IMR-90 (cell line): ENCODE measurements at regions of chr10 and their contacts with region 1.

Region 1: GRCh38 chr10:19412531-19412930 is 363.9 kb downstream of the MALRD1 start:
- DNase-seq: peak; percentile 45
- ATAC-seq: peak; percentile 69
- H3K4me3 ChIP-seq: no peak overlapping the region
- H3K27ac ChIP-seq: no peak overlapping the region
- H3K4me1 ChIP-seq: no peaks in the 10 kb centered on the region
- H3K27me3 ChIP-seq: no peaks in the 10 kb centered on the region
- CTCF ChIP-seq: peak; percentile 52
- POLR2A ChIP-seq: no peak
- RAD21 ChIP-seq: peak; percentile 66

Region 2: GRCh38 chr10:18689498-18689897 is 723.0 kb before region 1 on chr10:
- CTCF ChIA-PET with region 1: interaction called, 3 read pairs
- POLR2A ChIA-PET with region 1: no interaction called
- dilution Hi-C with region 1: no loop called
- in situ Hi-C with region 1: no loop called
- intact Hi-C with region 1: loop called (anchors 2 kb)
- DNase-seq: peak; percentile 65
- ATAC-seq: peak; percentile 87
- H3K4me3 ChIP-seq: no peak overlapping the region
- H3K27ac ChIP-seq: no peak overlapping the region
- H3K4me1 ChIP-seq: no peaks in the 10 kb centered on the region; the same call in 1 of the 2 replicates
- H3K27me3 ChIP-seq: no peaks in the 10 kb centered on the region
- CTCF ChIP-seq: peak; percentile 70
- POLR2A ChIP-seq: no peak
- RAD21 ChIP-seq: peak; percentile 76

Region 3: DNA sequence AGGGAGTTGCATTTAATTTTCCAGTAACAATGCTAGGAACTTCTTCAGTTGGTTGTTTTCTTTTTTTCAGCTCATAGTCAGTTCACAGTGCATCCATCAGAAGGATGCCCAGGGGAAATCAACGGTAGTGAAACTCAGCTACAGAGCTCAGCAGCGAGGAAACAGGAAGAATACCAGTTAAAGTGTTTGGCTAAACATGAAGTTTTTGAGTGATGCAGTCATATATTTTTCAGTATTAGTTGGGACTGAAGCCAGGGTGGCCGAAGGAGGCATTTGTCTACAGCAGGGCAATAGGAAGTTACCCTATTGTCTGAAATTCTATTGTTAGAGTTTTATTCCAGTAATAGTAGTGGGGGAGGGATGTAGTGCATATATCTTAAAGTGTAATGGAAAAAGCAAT is 409.2 kb before region 1 on chr10:
- CTCF ChIA-PET with region 1: no interaction called
- POLR2A ChIA-PET with region 1: no interaction called
- dilution Hi-C with region 1: no loop called
- in situ Hi-C with region 1: no loop called
- intact Hi-C with region 1: no loop called
- DNase-seq: no peak
- ATAC-seq: no peak
- H3K4me3 ChIP-seq: no peak overlapping the region
- H3K27ac ChIP-seq: no peak overlapping the region
- H3K4me1 ChIP-seq: peaks cover 2% of the 10 kb centered on the region; the same call in 1 of the 2 replicates
- H3K27me3 ChIP-seq: no peaks in the 10 kb centered on the region
- CTCF ChIP-seq: no peak
- POLR2A ChIP-seq: no peak
- RAD21 ChIP-seq: no peak

Region 4: DNA sequence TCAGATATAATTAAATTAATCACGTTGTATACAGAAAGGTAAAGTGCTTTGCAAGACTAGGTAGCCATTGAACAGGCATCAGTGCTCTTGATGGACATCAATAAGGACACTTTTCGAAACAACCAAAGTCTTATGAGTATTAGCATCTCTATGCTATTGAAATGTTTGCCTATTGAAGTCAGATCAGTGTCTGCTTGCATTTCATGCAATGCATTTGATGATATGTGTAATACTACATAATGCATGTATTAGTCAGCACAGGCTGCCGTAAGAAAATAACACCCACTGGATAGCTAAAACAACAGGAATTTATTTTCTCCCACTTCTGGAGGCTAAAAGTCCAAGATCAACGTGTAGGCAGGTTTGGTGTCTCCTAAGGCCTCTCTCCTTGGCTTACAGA is 194.4 kb after region 1 on chr10:
- CTCF ChIA-PET with region 1: no interaction called
- POLR2A ChIA-PET with region 1: no interaction called
- dilution Hi-C with region 1: no loop called
- in situ Hi-C with region 1: no loop called
- intact Hi-C with region 1: loop called (anchors 5 kb)
- DNase-seq: peak; percentile 30
- ATAC-seq: no peak
- H3K4me3 ChIP-seq: no peak overlapping the region
- H3K27ac ChIP-seq: no peak overlapping the region
- H3K4me1 ChIP-seq: no peaks in the 10 kb centered on the region
- H3K27me3 ChIP-seq: no peaks in the 10 kb centered on the region
- CTCF ChIP-seq: no peak
- POLR2A ChIP-seq: no peak
- RAD21 ChIP-seq: no peak

Region 5: GRCh38 chr10:19683960-19684359 is 271.4 kb after region 1 on chr10:
- CTCF ChIA-PET with region 1: no interaction called
- POLR2A ChIA-PET with region 1: no interaction called
- dilution Hi-C with region 1: no loop called
- in situ Hi-C with region 1: no loop called
- intact Hi-C with region 1: loop called (anchors 1 kb)
- DNase-seq: peak; percentile 59
- ATAC-seq: peak; percentile 70
- H3K4me3 ChIP-seq: no peak overlapping the region
- H3K27ac ChIP-seq: no peak overlapping the region
- H3K4me1 ChIP-seq: peaks cover 4% of the 10 kb centered on the region
- H3K27me3 ChIP-seq: no peaks in the 10 kb centered on the region
- CTCF ChIP-seq: peak; percentile 51
- POLR2A ChIP-seq: no peak
- RAD21 ChIP-seq: peak; percentile 53

Region 6: GRCh38 chr10:19788075-19788686 is 375.6 kb after region 1 on chr10:
- CTCF ChIA-PET with region 1: no interaction called
- POLR2A ChIA-PET with region 1: no interaction called
- dilution Hi-C with region 1: no loop called
- in situ Hi-C with region 1: loop called (anchors 10 kb)
- intact Hi-C with region 1: loop called (anchors 1 kb)
- DNase-seq: peak; percentile 73
- ATAC-seq: peak; percentile 75; the same call in 1 of the 2 replicates
- H3K4me3 ChIP-seq: no peak overlapping the region
- H3K27ac ChIP-seq: no peak overlapping the region
- H3K4me1 ChIP-seq: no peaks in the 10 kb centered on the region
- H3K27me3 ChIP-seq: no peaks in the 10 kb centered on the region
- CTCF ChIP-seq: peak; percentile 79
- POLR2A ChIP-seq: no peak
- RAD21 ChIP-seq: peak; percentile 73